T-cell (primary cell): ENCODE measurements at regions of chr1 and their contacts with region 1.

Region 1: GRCh38 chr1:40599926-40600325 is 65.6 kb downstream of the RIMS3 start:
- DNase-seq: no peak
- ATAC-seq: no peak
- H3K4me3 ChIP-seq: no peak overlapping the region
- H3K4me3 Mint-ChIP-seq: no peak overlapping the region
- H3K27ac ChIP-seq: no peak overlapping the region
- H3K27ac Mint-ChIP-seq: no peak overlapping the region
- H3K4me1 ChIP-seq: no peaks in the 10 kb centered on the region
- H3K4me1 Mint-ChIP-seq: no peaks in the 10 kb centered on the region
- H3K27me3 ChIP-seq: peaks cover 0 to 18% of the 10 kb centered on the region in 2 experiments
- H3K27me3 Mint-ChIP-seq: peaks cover 4 to 6% of the 10 kb centered on the region in 2 donors

Region 2: DNA sequence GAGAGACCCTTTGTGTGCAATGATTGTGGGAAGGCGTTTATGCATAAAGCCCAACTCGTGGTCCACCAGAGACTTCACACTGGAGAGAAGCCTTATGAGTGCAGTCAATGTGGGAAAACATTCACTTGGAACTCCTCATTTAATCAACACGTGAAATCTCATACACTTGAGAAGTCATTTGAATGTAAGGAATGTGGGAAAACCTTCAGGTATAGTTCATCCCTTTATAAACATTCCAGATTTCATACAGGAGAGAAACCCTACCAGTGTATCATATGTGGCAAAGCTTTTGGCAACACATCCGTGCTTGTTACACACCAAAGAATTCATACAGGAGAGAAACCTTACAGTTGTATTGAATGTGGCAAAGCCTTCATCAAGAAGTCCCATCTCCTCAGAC is 53.0 kb before region 1 on chr1:
- CTCF ChIA-PET with region 1: no interaction called
- POLR2A ChIA-PET with region 1: no interaction called
- DNase-seq: no peak
- ATAC-seq: no peak
- H3K4me3 ChIP-seq: no peak overlapping the region
- H3K4me3 Mint-ChIP-seq: no peak overlapping the region
- H3K27ac ChIP-seq: no peak overlapping the region
- H3K27ac Mint-ChIP-seq: no peak overlapping the region
- H3K4me1 ChIP-seq: no peaks in the 10 kb centered on the region
- H3K4me1 Mint-ChIP-seq: no peaks in the 10 kb centered on the region
- H3K27me3 ChIP-seq: no peaks in the 10 kb centered on the region
- H3K27me3 Mint-ChIP-seq: no peaks in the 10 kb centered on the region

Region 3: GRCh38 chr1:40575336-40575735 is 24.6 kb before region 1 on chr1:
- CTCF ChIA-PET with region 1: no interaction called
- POLR2A ChIA-PET with region 1: no interaction called
- DNase-seq: no peak
- ATAC-seq: no peak
- H3K4me3 ChIP-seq: no peak overlapping the region
- H3K4me3 Mint-ChIP-seq: no peak overlapping the region
- H3K27ac ChIP-seq: no peak overlapping the region
- H3K27ac Mint-ChIP-seq: no peak overlapping the region
- H3K4me1 ChIP-seq: no peaks in the 10 kb centered on the region
- H3K4me1 Mint-ChIP-seq: no peaks in the 10 kb centered on the region
- H3K27me3 ChIP-seq: peaks cover 0 to 2% of the 10 kb centered on the region in 2 experiments
- H3K27me3 Mint-ChIP-seq: peaks cover 9 to 18% of the 10 kb centered on the region in 2 donors

Region 4: GRCh38 chr1:40919475-40920011 is 319.6 kb after region 1 on chr1:
- CTCF ChIA-PET with region 1: no interaction called
- POLR2A ChIA-PET with region 1: no interaction called
- DNase-seq: no peak
- ATAC-seq: no peak
- H3K4me3 ChIP-seq: no peak overlapping the region
- H3K4me3 Mint-ChIP-seq: no peak overlapping the region
- H3K27ac ChIP-seq: no peak overlapping the region
- H3K27ac Mint-ChIP-seq: no peak overlapping the region
- H3K4me1 ChIP-seq: no peaks in the 10 kb centered on the region
- H3K4me1 Mint-ChIP-seq: no peaks in the 10 kb centered on the region
- H3K27me3 ChIP-seq: peaks cover 0 to 12% of the 10 kb centered on the region in 2 experiments
- H3K27me3 Mint-ChIP-seq: no peaks in the 10 kb centered on the region

Region 5: GRCh38 chr1:41353726-41354125 is 753.8 kb after region 1 on chr1:
- CTCF ChIA-PET with region 1: no interaction called
- POLR2A ChIA-PET with region 1: no interaction called
- DNase-seq: peak in 1 of 35 experiments; percentile 19
- ATAC-seq: no peak
- H3K4me3 ChIP-seq: no peak overlapping the region
- H3K4me3 Mint-ChIP-seq: no peak overlapping the region
- H3K27ac ChIP-seq: no peak overlapping the region
- H3K27ac Mint-ChIP-seq: no peak overlapping the region
- H3K4me1 ChIP-seq: peaks cover 0 to 3% of the 10 kb centered on the region in 2 experiments
- H3K4me1 Mint-ChIP-seq: peaks cover 0 to 2% (median 0%) of the 10 kb centered on the region in 3 donors
- H3K27me3 ChIP-seq: peaks cover 0 to 35% of the 10 kb centered on the region in 2 experiments
- H3K27me3 Mint-ChIP-seq: peaks cover 8 to 22% of the 10 kb centered on the region in 2 donors

Region 6: DNA sequence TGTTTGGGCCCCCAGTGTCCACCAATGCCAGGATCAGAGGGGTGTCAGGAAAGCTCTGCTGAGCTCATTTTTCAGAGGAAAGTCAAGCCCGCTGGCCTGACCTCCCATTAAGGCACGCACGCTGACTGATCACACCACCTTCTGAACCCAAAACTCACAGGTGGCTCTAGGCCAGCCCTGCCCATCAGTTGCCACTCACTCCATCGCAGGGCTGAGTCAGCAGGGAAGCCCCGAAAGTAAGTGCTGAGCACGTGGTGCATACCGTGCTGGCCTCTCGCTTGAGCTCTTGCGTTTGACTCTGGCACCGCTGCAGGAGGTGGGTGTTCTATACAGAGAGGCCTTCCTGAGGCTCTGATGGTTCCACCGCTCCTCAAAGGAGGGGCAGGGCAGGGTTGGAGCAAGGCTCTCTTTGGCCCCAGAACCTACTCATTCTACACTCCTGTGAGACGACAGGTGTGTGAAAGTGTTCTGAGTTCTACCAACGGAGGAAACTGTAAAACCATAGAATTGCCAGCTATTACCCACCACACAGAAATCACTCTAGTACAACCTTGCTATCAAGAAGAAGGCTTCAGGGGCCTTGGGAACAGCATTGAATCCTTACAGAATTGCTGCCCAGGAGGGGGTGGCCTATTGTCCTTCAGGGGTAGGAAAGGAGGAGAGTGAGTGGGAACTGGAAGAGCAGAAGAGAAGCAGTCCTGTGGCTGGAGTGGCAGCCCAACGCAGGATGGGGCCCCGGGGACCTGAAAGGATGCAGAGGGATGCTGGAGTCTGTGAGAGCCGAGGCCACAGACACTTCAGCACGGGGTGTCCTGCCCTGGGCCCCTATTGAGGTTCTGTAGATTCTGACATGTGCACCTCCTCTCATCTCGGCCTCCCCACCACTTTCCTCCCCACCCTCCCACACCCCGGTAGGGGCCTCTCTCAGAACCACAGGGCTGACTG is 1099.3 kb after region 1 on chr1:
- CTCF ChIA-PET with region 1: no interaction called
- POLR2A ChIA-PET with region 1: interaction called in 1 of 2 experiments, 10 read pairs
- DNase-seq: peak in 7 of 35 experiments; percentile 7 to 56 (median 18)
- ATAC-seq: peak in 1 of 4 experiments; percentile 55
- H3K4me3 ChIP-seq: no peak overlapping the region
- H3K4me3 Mint-ChIP-seq: no peak overlapping the region
- H3K27ac ChIP-seq: no peak overlapping the region
- H3K27ac Mint-ChIP-seq: no peak overlapping the region
- H3K4me1 ChIP-seq: peaks cover 0 to 26% of the 10 kb centered on the region in 2 experiments
- H3K4me1 Mint-ChIP-seq: peaks cover 3 to 12% (median 4%) of the 10 kb centered on the region in 3 donors
- H3K27me3 ChIP-seq: no peaks in the 10 kb centered on the region
- H3K27me3 Mint-ChIP-seq: no peaks in the 10 kb centered on the region